Activated T-helper 1 cell treated with anti-CD3 and anti-CD28 coated beads, Interleukin-12 subunit alpha, Interleukin-12 subunit beta, Interleukin-2, Interleukin-4 antibody, amounts not matched to agents 30 ng/mL and 10 ng/mL and 1 ng/mL, durations not matched to agents 14 hours and 24 hours and 36 hours (primary cell): ENCODE measurements at regions of chr2 and their contacts with region 1.

Region 1: DNA sequence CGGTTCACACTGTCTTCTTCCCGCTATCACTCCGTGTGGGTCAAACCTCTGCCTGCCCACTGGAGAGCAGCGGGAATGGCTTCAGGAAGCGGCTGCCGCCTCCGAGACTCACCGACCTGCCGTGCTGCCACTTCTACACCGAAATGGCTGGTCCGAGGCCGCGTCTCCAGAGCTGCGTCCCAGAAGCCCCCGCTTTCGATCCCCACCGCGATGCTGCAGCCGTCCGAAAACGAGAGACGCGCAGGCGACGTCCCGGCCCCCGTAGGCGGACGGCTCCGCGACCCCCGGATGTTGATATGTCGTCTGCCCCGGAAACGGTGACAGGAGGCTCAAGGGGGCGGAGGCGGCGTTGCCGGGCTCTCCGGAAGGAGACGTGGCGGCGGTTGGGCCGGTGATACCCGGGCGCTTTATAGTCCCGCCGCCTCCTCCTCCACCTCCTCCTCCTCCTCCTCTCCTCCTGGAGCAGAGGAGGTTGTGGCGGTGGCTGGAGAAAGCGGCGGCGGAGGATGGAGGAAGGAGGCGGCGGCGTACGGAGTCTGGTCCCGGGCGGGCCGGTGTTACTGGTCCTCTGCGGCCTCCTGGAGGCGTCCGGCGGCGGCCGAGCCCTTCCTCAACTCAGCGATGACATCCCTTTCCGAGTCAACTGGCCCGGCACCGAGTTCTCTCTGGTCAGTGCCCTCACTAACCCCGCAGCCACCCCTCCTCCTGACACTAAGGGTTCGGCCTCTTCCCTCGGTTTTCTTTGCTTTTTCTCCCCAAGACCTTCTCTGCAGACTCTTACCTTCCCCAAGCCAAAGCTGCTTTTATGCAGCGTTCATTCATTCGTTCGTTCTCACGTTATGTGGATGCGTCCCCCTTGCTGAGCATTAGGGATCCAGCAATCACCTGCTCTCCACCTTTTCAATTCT is at the starts of genes ASB3 and ERLEC1:
- DNase-seq: peak; percentile 87
- H3K4me3 Mint-ChIP-seq: peak within 1 kb of the TSS; percentile 99
- H3K27ac Mint-ChIP-seq: peak within 1 kb of the TSS; percentile 98
- H3K4me1 Mint-ChIP-seq: peaks cover 47% of the 10 kb centered on the region
- H3K27me3 Mint-ChIP-seq: no peaks in the 10 kb centered on the region
- total RNA-seq, gene ASB3: 18.6 and 21.5 TPM in 2 replicates
- total RNA-seq, gene ERLEC1: 28.4 and 29.6 TPM in 2 replicates

Region 2: GRCh38 chr2:52312486-52312885 is 1474.5 kb before region 1 on chr2:
- intact Hi-C with region 1: no loop called
- DNase-seq: no peak
- H3K4me3 Mint-ChIP-seq: no peak overlapping the region
- H3K27ac Mint-ChIP-seq: no peak overlapping the region
- H3K4me1 Mint-ChIP-seq: no peaks in the 10 kb centered on the region
- H3K27me3 Mint-ChIP-seq: no peaks in the 10 kb centered on the region

Region 3: DNA sequence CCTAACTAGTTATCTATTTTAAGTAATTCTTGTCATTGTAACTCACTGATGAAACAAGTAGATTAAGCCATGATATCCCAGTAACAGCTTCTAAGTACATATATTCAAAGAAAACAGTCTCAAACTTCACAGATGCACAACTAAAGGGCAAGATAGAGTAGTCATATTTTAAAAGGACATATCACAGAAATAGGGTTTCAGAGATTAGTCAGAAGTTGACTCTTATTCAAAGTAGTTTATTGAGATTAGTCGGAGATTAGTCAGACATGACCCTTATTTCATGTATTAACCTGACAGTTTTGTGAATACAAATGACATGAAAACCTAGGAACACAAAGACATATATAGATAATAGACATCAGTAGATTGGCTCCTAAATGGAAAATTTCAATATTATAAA is 35.2 kb before region 1 on chr2:
- intact Hi-C with region 1: loop called (anchors 1 kb)
- DNase-seq: no peak
- H3K4me3 Mint-ChIP-seq: no peak overlapping the region
- H3K27ac Mint-ChIP-seq: peak overlapping the region; percentile 20
- H3K4me1 Mint-ChIP-seq: peaks cover 26% of the 10 kb centered on the region
- H3K27me3 Mint-ChIP-seq: no peaks in the 10 kb centered on the region

Region 4: DNA sequence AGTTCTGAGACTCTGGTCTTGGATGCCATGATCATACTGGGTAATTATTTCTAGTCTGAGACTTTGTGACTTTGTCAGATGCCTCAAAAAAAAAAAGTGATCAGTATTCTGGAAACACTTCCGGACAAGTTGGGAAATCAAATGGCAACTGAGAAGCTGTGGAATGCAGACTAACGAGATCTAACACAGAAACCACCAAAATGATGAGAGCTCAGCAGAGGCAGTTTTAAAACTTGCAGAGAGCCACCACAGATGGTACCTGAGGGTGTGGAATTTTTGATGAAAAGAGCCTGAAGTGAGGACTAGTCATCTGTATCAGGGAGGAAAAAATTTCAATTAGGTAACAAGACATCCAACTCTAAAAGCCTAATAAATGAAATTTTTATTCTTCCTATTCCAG is 78.3 kb after region 1 on chr2:
- intact Hi-C with region 1: loop called (anchors 5 kb)
- DNase-seq: no peak
- H3K4me3 Mint-ChIP-seq: no peak overlapping the region
- H3K27ac Mint-ChIP-seq: no peak overlapping the region
- H3K4me1 Mint-ChIP-seq: no peaks in the 10 kb centered on the region
- H3K27me3 Mint-ChIP-seq: no peaks in the 10 kb centered on the region

Region 5: GRCh38 chr2:53970724-53971602 is 184.0 kb after region 1 on chr2 and contains the start of gene PSME4:
- intact Hi-C with region 1: loop called (anchors 1 kb)
- DNase-seq: peak; percentile 91
- H3K4me3 Mint-ChIP-seq: peak within 1 kb of the TSS; percentile 99
- H3K27ac Mint-ChIP-seq: peak within 1 kb of the TSS; percentile 99
- H3K4me1 Mint-ChIP-seq: peaks cover 39% of the 10 kb centered on the region
- H3K27me3 Mint-ChIP-seq: no peaks in the 10 kb centered on the region
- total RNA-seq, gene PSME4: 59.3 and 59.7 TPM in 2 replicates

Region 6: DNA sequence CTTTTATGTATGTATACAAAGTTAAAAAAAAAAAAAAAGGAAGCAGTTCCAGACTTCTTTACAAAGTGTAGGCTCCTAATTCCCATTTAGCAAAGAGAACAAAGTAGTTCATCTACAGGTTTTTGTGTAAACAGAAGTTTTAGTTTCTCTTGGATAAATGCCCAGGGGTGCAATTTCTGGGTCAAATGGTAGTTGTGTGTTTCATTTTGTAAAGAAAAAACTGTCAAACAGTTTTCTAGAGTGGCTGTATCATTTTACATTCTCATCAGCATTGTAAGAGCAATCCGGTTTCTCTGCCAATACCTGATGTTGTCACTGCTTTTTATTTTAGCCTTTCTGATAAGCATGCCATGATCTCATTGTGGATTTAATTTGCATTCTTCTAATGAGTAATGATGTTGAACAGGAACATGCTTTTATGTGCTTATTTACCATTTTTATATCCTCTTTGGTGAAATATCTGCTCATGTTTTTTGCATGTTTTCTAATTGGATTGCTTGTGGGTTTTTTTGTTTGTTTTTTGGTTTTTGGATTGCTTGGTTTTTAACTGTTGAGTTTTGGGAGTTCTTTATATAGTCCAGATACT is 200.5 kb after region 1 on chr2:
- intact Hi-C with region 1: no loop called
- DNase-seq: no peak
- H3K4me3 Mint-ChIP-seq: no peak overlapping the region
- H3K27ac Mint-ChIP-seq: no peak overlapping the region
- H3K4me1 Mint-ChIP-seq: peaks cover 5% of the 10 kb centered on the region
- H3K27me3 Mint-ChIP-seq: no peaks in the 10 kb centered on the region

Region 7: DNA sequence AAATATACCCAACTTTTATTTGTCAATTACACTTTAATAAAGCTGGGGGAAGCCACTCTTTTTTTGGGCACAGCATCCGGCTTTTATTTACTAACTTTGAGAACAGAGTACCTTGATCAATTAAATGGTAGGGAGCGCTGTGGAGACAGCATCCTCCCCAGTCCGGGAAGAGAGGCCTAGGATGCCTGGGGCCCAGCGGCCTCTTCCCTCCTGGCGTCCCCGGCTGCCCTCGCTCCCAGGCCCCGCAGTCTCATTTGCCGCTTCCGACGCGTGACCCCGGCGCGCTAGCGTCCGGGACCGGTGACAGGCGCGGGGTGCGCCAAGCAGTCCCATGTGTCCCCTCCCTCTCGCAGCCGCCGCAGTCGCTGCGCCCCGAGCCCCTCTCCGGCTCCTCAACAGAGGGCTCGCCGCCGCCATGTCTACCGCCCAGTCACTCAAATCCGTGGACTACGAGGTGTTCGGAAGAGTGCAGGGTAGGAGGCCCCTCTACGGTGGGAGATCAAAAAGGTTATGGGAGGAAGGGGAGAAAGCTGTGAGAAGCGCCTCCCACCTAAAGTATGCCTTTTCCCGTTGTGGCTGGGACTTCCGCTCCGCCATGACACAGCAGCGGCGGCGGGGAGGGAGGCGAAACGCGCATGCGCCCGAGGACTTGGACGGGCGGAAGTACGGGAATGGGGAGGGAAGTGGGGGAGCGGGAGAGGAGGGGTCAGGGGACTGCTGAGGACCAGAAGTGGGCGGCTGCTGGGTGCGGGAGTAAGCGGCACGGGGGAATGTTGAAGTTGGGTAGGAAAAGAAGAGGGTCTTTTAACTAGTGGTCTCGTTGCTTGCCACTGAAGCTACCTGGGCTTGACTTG is 328.6 kb after region 1 on chr2 and contains the start of gene ACYP2:
- intact Hi-C with region 1: loop called (anchors 2 kb)
- DNase-seq: peak; percentile 88
- H3K4me3 Mint-ChIP-seq: peak within 1 kb of the TSS; percentile 92
- H3K27ac Mint-ChIP-seq: peak within 1 kb of the TSS; percentile 97
- H3K4me1 Mint-ChIP-seq: peaks cover 14% of the 10 kb centered on the region
- H3K27me3 Mint-ChIP-seq: peaks cover 7% of the 10 kb centered on the region
- total RNA-seq, gene ACYP2: 5.2 and 5.9 TPM in 2 replicates

Region 8: DNA sequence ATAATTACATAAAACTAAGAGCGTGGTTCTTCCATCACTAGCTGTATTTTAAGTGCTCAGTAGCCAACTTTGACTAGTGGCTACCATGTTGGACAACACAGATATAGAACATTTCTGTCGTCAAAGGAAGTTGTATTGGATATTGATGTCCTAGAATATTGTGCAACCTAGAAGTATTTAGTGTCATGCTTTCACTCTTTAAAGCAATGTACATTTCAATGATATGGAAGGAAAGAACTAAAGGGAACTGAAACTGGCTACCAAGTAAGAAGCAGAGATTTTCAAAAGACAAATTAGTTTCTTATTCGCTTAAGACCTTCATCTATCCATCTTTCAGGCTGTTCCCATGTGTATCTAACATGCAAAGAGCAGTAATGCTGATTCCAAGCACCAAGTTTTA is 851.1 kb after region 1 on chr2:
- intact Hi-C with region 1: no loop called
- DNase-seq: no peak
- H3K4me3 Mint-ChIP-seq: no peak overlapping the region
- H3K27ac Mint-ChIP-seq: no peak overlapping the region
- H3K4me1 Mint-ChIP-seq: peaks cover 51% of the 10 kb centered on the region
- H3K27me3 Mint-ChIP-seq: no peaks in the 10 kb centered on the region

Region 9: DNA sequence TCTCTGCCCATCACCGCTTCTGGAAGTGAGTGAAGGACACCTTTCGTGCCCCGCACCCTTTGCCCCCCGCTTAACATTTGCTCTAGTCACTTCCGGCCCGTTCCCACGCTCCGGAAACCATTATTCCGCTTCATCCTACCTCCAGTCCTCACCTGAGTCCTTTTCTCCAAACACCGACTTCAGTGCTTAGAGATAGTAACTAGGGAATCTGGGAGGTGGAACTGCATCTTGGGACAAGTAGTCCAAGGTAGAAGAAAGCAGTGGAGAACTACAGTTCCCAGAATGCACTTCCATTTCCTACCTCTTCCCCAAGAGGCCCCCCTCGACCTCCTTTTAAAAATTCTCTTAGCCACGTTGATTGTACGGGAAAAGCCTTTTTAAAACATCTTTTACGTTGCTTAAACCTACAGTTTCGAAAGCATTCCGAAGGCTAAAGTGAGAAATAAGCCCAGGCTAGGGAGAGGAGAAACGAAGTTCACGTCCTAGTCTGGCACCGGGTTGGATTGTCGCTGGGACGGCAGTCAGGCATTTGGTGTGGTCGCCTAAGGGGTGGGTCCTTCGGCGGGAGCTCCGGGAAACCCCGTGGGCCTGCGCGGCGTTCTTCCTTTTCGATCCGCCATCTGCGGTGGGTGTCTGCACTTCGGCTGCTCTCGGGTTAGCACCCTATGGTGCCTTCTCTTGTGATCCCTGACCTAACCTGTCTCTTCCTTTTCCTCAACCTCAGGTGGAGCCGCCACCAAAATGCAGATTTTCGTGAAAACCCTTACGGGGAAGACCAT is 1445.3 kb after region 1 on chr2 and contains the starts of genes CLHC1 and RPS27A:
- intact Hi-C with region 1: loop called (anchors 2 kb)
- DNase-seq: peak; percentile 89
- H3K4me3 Mint-ChIP-seq: peak within 1 kb of the TSS; percentile 100
- H3K27ac Mint-ChIP-seq: peak within 1 kb of the TSS; percentile 97
- H3K4me1 Mint-ChIP-seq: peaks cover 63% of the 10 kb centered on the region
- H3K27me3 Mint-ChIP-seq: no peaks in the 10 kb centered on the region
- total RNA-seq, gene CLHC1: 9.0 and 12.3 TPM in 2 replicates
- total RNA-seq, gene RPS27A: 949 and 953 TPM in 2 replicates